ENCODE measurements at regions of chr12 and their contacts with region 1.

Region 1: GRCh38 chr12:105041186-105041585 is 43.1 kb downstream of the ALDH1L2 start:
- DNase-seq: no peak
- ATAC-seq: no peak
- H3K4me3 ChIP-seq: no peak overlapping the region
- H3K27ac ChIP-seq: no peak overlapping the region
- H3K4me1 ChIP-seq: no peaks in the 10 kb centered on the region
- H3K27me3 ChIP-seq: no peaks in the 10 kb centered on the region
- CTCF ChIP-seq: no peak

Region 2: DNA sequence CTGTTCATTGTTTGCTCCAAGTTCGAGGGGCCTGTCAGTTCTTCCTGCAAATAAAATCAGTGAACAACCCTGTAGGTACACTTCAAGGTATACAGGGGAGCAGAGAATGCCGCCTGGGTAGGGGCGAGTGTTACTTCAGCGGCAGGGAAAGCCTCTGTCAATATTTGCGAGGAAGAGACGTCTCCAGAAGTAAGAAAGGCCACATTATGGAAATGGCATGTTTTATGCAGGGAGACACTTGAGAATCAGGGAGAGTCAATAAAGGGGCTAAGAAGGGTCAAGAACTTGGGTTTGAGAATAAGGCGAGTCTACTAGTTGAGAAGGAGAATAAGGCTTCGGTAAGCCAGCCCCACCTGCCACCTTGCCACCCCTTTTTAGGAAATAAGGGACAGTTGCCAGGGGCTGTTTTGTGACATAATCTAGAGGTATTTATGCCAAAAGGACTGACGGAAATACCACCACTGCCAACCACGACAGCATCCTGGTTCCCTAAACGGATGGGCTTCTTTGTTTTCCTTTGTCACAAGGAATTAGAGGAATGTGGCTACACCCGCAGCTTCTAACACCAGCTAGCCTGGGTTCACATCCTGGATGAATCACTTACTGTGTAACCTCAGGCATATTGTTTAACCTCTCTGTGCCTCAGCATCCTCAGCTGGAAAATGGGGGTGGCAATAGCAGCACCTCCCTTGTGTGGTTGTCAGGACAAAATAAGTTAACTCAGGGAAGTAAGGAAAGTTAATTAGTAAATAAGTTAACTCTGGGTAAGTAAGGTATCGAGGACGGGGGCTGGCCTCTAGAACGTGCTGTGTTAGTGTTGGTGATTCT is 669.9 kb before region 1 on chr12:
- intact Hi-C with region 1: loop called in 1 of 2 experiments (anchors 10 kb)
- DNase-seq: peak in 1 of 4 donors; percentile 37
- ATAC-seq: peak; percentile 56
- H3K4me3 ChIP-seq: no peak overlapping the region
- H3K27ac ChIP-seq: no peak overlapping the region
- H3K4me1 ChIP-seq: no peaks in the 10 kb centered on the region
- H3K27me3 ChIP-seq: no peaks in the 10 kb centered on the region
- CTCF ChIP-seq: no peak